ENCODE measurements at regions of chr3 and their contacts with region 1.

Region 1: GRCh38 chr3:197010556-197011351 is 18.9 kb downstream of the MELTF start:
- DNase-seq: no peak
- ATAC-seq: no peak
- H3K4me3 ChIP-seq: no peak overlapping the region
- H3K27ac ChIP-seq: no peak overlapping the region
- H3K4me1 ChIP-seq: no peaks in the 10 kb centered on the region
- CTCF ChIP-seq: no peak
- EP300 ChIP-seq: no peak
- POLR2A ChIP-seq: no peak
- RAD21 ChIP-seq: no peak

Region 2: GRCh38 chr3:196789759-196790419 is 220.9 kb before region 1 on chr3:
- CTCF ChIA-PET with region 1: no interaction called
- POLR2A ChIA-PET with region 1: no interaction called
- DNase-seq: peak; percentile 20 to 51
- ATAC-seq: peak; percentile 64 to 80; a peak in 4 of 6 replicates
- H3K4me3 ChIP-seq: no peak overlapping the region
- H3K27ac ChIP-seq: peak overlapping the region in 1 of 2 experiments; percentile 63; a peak in 3 of 6 replicates
- H3K4me1 ChIP-seq: peaks cover 48% of the 10 kb centered on the region
- CTCF ChIP-seq: no peak; the same call in 2 of the 3 replicates
- EP300 ChIP-seq: no peak
- POLR2A ChIP-seq: no peak
- RAD21 ChIP-seq: peak in 1 of 2 experiments; percentile 35; a peak in 3 of 5 replicates

Region 3: GRCh38 chr3:197029511-197030167 is 18.9 kb after region 1 on chr3 and contains the start of gene MELTF:
- CTCF ChIA-PET with region 1: interaction called, 49 read pairs
- POLR2A ChIA-PET with region 1: no interaction called
- DNase-seq: peak; percentile 75 to 80
- ATAC-seq: peak; percentile 55 to 81
- H3K4me3 ChIP-seq: peak within 1 kb of the TSS; percentile 100
- H3K27ac ChIP-seq: peak within 1 kb of the TSS; percentile 97 to 99
- H3K4me1 ChIP-seq: peaks cover 31% of the 10 kb centered on the region
- CTCF ChIP-seq: peak; percentile 76
- EP300 ChIP-seq: no peak
- POLR2A ChIP-seq: peak; percentile 45
- RAD21 ChIP-seq: peak in 1 of 2 experiments; percentile 45; a peak in 4 of 5 replicates
- polyA plus RNA-seq, gene MELTF: 10.5 and 10.9 TPM in 2 replicates

Region 4: GRCh38 chr3:197151569-197151968 is 140.8 kb after region 1 on chr3:
- CTCF ChIA-PET with region 1: no interaction called
- POLR2A ChIA-PET with region 1: no interaction called
- DNase-seq: peak in 1 of 2 experiments; percentile 26
- ATAC-seq: no peak
- H3K4me3 ChIP-seq: no peak overlapping the region
- H3K27ac ChIP-seq: no peak overlapping the region
- H3K4me1 ChIP-seq: peaks cover 6% of the 10 kb centered on the region; the same call in 2 of the 3 replicates
- CTCF ChIP-seq: no peak
- EP300 ChIP-seq: no peak
- POLR2A ChIP-seq: no peak
- RAD21 ChIP-seq: no peak